ENCODE measurements at regions of chr9 and their contacts with region 1.

Region 1: DNA sequence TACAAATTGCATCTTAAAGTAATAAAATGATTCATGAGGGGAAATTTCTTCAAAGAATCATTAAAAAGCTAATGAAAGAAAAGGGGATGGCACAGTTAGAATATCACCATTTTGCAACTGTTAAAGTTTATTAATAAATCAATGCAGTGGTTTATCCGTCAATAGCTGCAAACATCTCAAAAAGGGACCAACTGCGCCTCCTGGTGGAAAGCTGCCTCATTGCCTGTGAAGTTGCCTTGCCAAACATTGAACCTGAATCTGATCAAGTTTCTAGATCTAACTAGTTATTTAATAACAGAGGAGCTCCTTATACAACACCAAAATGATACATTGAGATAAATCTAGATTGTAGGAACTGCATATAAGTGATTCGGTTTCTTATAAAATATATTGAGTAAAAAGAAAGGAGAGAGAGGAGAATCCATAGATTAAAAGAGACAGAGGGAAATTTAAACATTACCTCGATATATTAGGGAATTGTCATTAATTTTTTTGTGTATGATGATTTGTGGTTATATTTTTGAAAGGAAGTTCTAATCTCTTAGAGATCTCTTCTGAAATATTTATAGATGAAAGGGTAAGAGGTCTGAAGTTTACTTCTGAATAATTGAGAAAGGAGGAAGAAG is 6.9 kb upstream of the NDUFB6 start:
- DNase-seq: peak; percentile 78
- ATAC-seq: no peak

Region 2: GRCh38 chr9:32378993-32379729 is 200.7 kb before region 1 on chr9:
- intact Hi-C with region 1: loop called (anchors 5 kb)
- DNase-seq: no peak
- ATAC-seq: peak; percentile 91